HepG2 (cell line): ENCODE measurements at regions of chr6 and their contacts with region 1.

Region 1: DNA sequence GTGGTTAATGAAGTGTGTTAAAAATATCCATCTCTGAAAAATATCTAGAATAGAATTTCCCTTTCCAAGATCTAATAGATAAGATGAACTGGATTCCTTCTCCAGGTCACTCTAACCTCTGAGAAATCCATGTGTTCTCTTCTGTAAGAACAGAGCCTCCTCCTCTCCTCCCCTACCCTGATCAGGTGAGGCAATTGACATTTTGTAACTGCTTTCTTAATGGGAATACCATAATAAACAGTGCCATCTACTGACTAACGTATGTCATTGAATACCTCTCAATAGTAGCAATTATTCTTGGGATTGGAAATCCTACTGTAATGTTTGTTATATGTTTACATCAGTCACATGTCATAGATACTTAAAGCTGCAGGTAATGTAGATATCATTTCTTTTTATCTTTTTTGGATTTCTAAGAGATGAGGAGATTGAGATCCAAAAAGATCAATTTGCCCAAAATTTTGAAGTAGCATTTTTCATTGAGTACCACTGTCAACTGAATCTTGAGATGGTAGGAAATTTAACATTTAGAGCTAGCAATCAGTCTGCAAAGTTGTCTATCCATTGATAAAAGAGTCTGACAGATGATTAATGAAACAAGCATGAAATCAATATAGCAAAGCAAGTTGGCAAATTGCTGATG is 365.8 kb upstream of the HSF2 start:
- DNase-seq: peak; percentile 55
- ATAC-seq: peak; percentile 96
- H3K4me3 ChIP-seq: no peak overlapping the region
- H3K27ac ChIP-seq: no peak overlapping the region
- H3K4me1 ChIP-seq: no peaks in the 10 kb centered on the region
- H3K27me3 ChIP-seq: no peaks in the 10 kb centered on the region
- CTCF ChIP-seq: peak; percentile 77
- EP300 ChIP-seq: no peak
- POLR2A ChIP-seq: no peak
- RAD21 ChIP-seq: peak; percentile 51; the same call in 1 of the 2 replicates

Region 2: GRCh38 chr6:121319112-121319553 is 714.5 kb before region 1 on chr6:
- CTCF ChIA-PET with region 1: no interaction called
- POLR2A ChIA-PET with region 1: no interaction called
- in situ Hi-C with region 1: no loop called
- intact Hi-C with region 1: loop called (anchors 5 kb)
- DNase-seq: peak; percentile 41
- ATAC-seq: peak; percentile 87
- H3K4me3 ChIP-seq: no peak overlapping the region; a peak in 1 of 6 replicates
- H3K27ac ChIP-seq: no peak overlapping the region
- H3K4me1 ChIP-seq: no peaks in the 10 kb centered on the region
- H3K27me3 ChIP-seq: no peaks in the 10 kb centered on the region
- CTCF ChIP-seq: peak; percentile 46
- EP300 ChIP-seq: no peak
- POLR2A ChIP-seq: no peak
- RAD21 ChIP-seq: no peak

Region 3: DNA sequence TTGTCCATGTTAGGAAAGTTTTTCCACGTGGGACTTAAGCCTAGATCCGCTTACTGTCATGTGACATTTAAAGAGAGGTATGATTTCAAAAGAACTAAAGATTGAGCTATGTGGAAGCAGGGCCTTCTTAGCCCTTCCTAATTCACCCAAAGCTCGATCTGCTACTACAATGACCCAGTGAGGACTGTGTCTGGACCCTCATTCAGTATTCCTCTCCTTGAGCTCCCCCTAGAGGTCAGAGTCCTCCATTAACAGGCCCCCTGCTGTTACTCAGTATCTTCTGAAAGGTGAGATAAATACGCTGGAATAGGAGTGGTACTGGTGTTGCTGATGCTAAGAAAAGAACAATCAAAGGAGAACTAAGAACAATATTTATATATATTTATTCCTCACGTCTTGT is 184.2 kb before region 1 on chr6:
- CTCF ChIA-PET with region 1: no interaction called
- POLR2A ChIA-PET with region 1: no interaction called
- in situ Hi-C with region 1: no loop called
- intact Hi-C with region 1: loop called (anchors 5 kb)
- DNase-seq: peak; percentile 67
- ATAC-seq: peak; percentile 100
- H3K4me3 ChIP-seq: no peak overlapping the region
- H3K27ac ChIP-seq: no peak overlapping the region
- H3K4me1 ChIP-seq: no peaks in the 10 kb centered on the region
- H3K27me3 ChIP-seq: no peaks in the 10 kb centered on the region
- CTCF ChIP-seq: peak; percentile 86
- EP300 ChIP-seq: no peak
- POLR2A ChIP-seq: no peak
- RAD21 ChIP-seq: peak; percentile 62